Transverse colon (tissue), 4 donors: ENCODE measurements at regions of chr3 and their contacts with region 1.

Region 1: DNA sequence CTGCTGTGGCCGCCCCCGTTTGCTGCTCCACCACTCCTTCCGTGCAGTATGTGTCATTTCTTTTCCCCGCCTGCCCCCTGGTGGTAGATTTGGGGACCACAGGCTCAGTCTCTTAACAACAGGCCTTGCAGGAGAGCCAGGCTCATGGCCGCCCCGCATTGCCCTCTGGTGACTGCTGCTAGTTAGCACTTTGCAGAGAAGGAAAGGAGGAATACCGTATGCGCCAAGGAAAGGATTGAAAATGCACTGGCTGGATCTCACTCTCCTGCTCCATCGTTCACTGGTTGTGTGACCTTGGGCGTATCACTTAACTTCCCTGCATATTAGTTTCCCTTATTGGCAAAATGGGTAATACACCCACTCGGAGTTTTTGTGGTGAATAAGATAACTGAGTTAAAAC is 39.3 kb upstream of the PXYLP1 start:
- DNase-seq: peak; percentile 98
- H3K4me3 ChIP-seq: no peak overlapping the region
- H3K27ac ChIP-seq: no peak overlapping the region
- H3K4me1 ChIP-seq: peaks cover 0 to 4% (median 0%) of the 10 kb centered on the region in 4 donors
- H3K27me3 ChIP-seq: peaks cover 24% of the 10 kb centered on the region
- CTCF ChIP-seq: peak; percentile 94 to 98 (median 97)
- EP300 ChIP-seq: no peak
- POLR2A ChIP-seq: no peak

Region 2: GRCh38 chr3:140898340-140899180 is 293.8 kb before region 1 on chr3:
- in situ Hi-C with region 1: loop called in 3 of 4 experiments (anchors 10 to 25 kb)
- intact Hi-C with region 1: no loop called
- DNase-seq: no peak
- H3K4me3 ChIP-seq: no peak overlapping the region
- H3K27ac ChIP-seq: no peak overlapping the region
- H3K4me1 ChIP-seq: no peaks in the 10 kb centered on the region
- H3K27me3 ChIP-seq: no peaks in the 10 kb centered on the region
- CTCF ChIP-seq: peak; percentile 48 to 73 (median 53)
- EP300 ChIP-seq: no peak
- POLR2A ChIP-seq: no peak

Region 3: DNA sequence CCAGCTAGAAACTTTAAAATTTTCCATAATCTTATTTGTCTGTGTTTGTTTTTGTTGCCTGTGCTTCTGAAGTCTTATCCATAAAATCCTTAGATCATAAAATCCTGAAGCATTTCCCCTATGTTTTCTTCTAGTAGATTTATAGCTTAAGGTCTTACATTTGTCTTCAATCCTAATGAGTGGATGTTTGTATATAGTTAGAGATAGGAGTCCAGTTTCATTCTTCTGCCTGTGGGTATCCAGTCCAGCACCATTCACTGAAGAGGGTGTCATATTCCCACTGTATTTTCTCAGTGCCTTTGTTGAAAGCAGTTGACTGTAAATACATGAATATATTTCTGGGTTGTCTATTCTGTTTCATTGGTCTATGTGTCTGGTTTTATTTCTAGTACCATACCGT is 186.0 kb before region 1 on chr3:
- in situ Hi-C with region 1: loop called (anchors 5 to 25 kb)
- intact Hi-C with region 1: loop called (anchors 5 kb)
- DNase-seq: no peak
- H3K4me3 ChIP-seq: no peak overlapping the region
- H3K27ac ChIP-seq: no peak overlapping the region
- H3K4me1 ChIP-seq: no peaks in the 10 kb centered on the region
- H3K27me3 ChIP-seq: peaks cover 4% of the 10 kb centered on the region
- CTCF ChIP-seq: no peak
- EP300 ChIP-seq: no peak
- POLR2A ChIP-seq: no peak

Region 4: GRCh38 chr3:141011232-141011996 is 180.9 kb before region 1 on chr3:
- in situ Hi-C with region 1: loop called (anchors 5 to 25 kb)
- intact Hi-C with region 1: loop called (anchors 5 kb)
- DNase-seq: peak; percentile 71
- H3K4me3 ChIP-seq: no peak overlapping the region
- H3K27ac ChIP-seq: no peak overlapping the region
- H3K4me1 ChIP-seq: no peaks in the 10 kb centered on the region
- H3K27me3 ChIP-seq: peaks cover 4% of the 10 kb centered on the region
- CTCF ChIP-seq: peak; percentile 50 to 71 (median 69)
- EP300 ChIP-seq: no peak
- POLR2A ChIP-seq: no peak